Activated CD8-positive, alpha-beta T cell treated with anti-CD3 and anti-CD28 coated beads for 36 hours (primary cell): ENCODE measurements at regions of chr20 and their contacts with region 1.

Region 1: GRCh38 chr20:48738399-48739304 is 89.1 kb downstream of the PREX1 start:
- DNase-seq: peak; percentile 94
- ATAC-seq: peak; percentile 88
- H3K4me3 Mint-ChIP-seq: peak overlapping the region; percentile 46
- H3K27ac Mint-ChIP-seq: peak overlapping the region; percentile 95
- H3K4me1 Mint-ChIP-seq: peaks cover 61% of the 10 kb centered on the region
- H3K27me3 Mint-ChIP-seq: no peaks in the 10 kb centered on the region
- CTCF ChIP-seq: no peak

Region 2: GRCh38 chr20:48722737-48723191 is 15.9 kb before region 1 on chr20:
- CTCF ChIA-PET with region 1: interaction called, 7 read pairs
- POLR2A ChIA-PET with region 1: interaction called, 81 read pairs
- intact Hi-C with region 1: no loop called
- DNase-seq: peak; percentile 60
- ATAC-seq: peak; percentile 34
- H3K4me3 Mint-ChIP-seq: no peak overlapping the region
- H3K27ac Mint-ChIP-seq: peak overlapping the region; percentile 58
- H3K4me1 Mint-ChIP-seq: peaks cover 68% of the 10 kb centered on the region
- H3K27me3 Mint-ChIP-seq: no peaks in the 10 kb centered on the region
- CTCF ChIP-seq: no peak

Region 3: GRCh38 chr20:48750947-48751635 is 12.4 kb after region 1 on chr20:
- CTCF ChIA-PET with region 1: interaction called, 9 read pairs
- POLR2A ChIA-PET with region 1: interaction called, 10 read pairs
- intact Hi-C with region 1: no loop called
- DNase-seq: peak; percentile 57
- ATAC-seq: peak; percentile 69
- H3K4me3 Mint-ChIP-seq: peak overlapping the region; percentile 31
- H3K27ac Mint-ChIP-seq: peak overlapping the region; percentile 89
- H3K4me1 Mint-ChIP-seq: peaks cover 73% of the 10 kb centered on the region
- H3K27me3 Mint-ChIP-seq: no peaks in the 10 kb centered on the region
- CTCF ChIP-seq: no peak

Region 4: GRCh38 chr20:48760403-48760983 is 21.8 kb after region 1 on chr20:
- CTCF ChIA-PET with region 1: interaction called, 4 read pairs
- POLR2A ChIA-PET with region 1: interaction called, 28 read pairs
- intact Hi-C with region 1: no loop called
- DNase-seq: peak; percentile 85
- ATAC-seq: peak; percentile 80
- H3K4me3 Mint-ChIP-seq: peak overlapping the region; percentile 61
- H3K27ac Mint-ChIP-seq: peak overlapping the region; percentile 96
- H3K4me1 Mint-ChIP-seq: peaks cover 88% of the 10 kb centered on the region
- H3K27me3 Mint-ChIP-seq: no peaks in the 10 kb centered on the region
- CTCF ChIP-seq: no peak

Region 5: GRCh38 chr20:48787861-48788375 is 49.3 kb after region 1 on chr20:
- CTCF ChIA-PET with region 1: interaction called, 4 read pairs
- POLR2A ChIA-PET with region 1: interaction called, 3 read pairs
- intact Hi-C with region 1: loop called (anchors 5 kb)
- DNase-seq: no peak
- ATAC-seq: peak; percentile 18
- H3K4me3 Mint-ChIP-seq: no peak overlapping the region
- H3K27ac Mint-ChIP-seq: peak overlapping the region; percentile 66
- H3K4me1 Mint-ChIP-seq: peaks cover 54% of the 10 kb centered on the region
- H3K27me3 Mint-ChIP-seq: no peaks in the 10 kb centered on the region
- CTCF ChIP-seq: no peak